Posterior vena cava (tissue), 2 donors: ENCODE measurements at regions of chr20 and their contacts with region 1.

Region 1: GRCh38 chr20:37990571-37991151 is 42.6 kb downstream of the TTI1 start:
- DNase-seq: no peak

Region 2: DNA sequence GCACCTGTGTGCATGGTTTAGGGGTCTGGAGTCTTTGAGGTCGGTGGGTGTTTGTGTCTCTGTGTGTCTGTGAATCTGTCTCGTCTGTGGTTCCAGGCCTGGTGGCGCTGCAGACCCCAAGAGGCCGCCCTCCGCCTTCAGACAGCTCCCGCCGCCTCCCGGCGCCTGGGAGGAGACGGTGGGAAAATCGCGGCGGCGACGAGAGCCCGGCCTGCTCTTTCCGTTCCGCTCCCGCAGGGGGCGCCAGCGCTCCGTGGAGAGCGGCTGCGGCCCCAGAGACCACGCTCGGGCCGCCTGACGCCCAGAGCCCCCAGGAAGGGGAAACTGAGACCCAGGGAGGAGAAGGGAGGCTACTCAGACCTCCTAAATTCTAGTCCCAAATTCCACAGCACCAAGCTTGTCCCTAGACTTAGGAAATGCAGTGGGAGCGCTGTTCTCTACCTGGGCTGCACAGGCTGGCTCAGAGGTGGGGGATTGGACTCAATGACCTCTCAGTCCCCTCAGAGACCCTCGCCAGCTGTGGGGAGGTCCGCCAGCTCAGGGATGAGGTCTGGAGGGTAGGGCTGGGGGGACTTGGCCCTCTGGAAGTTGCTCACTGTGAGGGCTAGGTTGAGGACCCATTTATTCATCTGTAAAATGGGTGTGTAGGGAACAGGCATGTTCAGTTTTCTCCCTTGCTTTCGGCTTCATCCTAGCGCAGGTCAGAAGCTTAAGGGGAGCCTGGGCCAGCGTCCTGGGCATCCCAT is 426.1 kb before region 1 on chr20:
- intact Hi-C with region 1: loop called in 1 of 2 experiments (anchors 5 kb)
- DNase-seq: peak; percentile 88

Region 3: DNA sequence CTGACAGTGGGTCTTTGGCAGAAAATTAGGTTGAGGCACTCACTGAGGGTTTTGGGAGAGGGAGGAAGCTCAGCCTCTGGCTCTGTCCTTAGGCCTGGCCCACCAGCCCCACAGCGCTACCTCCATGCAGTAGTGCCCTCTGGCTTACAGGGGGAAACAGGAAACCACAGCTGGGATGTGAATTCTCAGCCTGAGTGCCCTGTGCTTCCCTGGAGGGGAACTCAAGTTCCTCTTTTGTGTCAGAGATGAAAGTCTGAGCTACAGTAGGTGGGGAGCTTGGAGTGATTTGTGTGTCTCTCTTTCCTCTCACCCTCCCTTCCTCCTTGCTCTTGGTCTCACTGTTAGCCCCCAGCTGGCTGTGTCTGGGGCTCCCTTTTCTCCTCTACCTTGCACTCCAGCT is 414.8 kb before region 1 on chr20:
- intact Hi-C with region 1: loop called in 1 of 2 experiments (anchors 10 kb)
- DNase-seq: peak; percentile 60

Region 4: DNA sequence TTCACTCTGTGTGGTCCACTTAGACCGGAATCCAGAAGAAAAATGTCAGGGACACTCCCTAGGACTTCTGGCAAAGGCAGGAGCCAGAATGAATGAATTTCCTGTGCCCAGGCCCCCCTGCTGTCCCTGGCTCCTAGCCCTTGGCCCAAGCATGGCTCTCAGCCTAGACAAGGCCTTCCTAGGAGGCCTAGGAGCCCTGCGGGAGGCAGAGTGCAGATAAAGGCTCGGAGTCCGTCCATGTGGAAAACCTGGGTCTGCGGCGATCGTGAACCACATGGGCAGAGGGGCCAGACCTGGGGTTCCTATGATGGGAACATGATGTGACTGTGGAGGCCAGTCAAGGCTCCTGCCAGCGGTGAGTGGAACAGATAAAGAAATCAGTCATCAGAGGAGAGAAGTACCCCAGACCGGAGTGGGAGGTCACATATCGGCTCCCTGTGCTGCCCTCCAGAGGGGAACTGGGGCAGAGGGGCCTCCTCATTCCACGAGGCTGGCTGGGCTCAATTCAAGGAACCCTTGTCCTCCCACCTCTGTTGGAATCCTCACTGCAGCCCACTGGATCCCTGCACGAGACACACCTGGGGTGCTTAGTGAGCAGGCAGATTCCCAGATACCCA is 93.6 kb before region 1 on chr20:
- intact Hi-C with region 1: loop called in 1 of 2 experiments (anchors 5 kb)
- DNase-seq: no peak

Region 5: DNA sequence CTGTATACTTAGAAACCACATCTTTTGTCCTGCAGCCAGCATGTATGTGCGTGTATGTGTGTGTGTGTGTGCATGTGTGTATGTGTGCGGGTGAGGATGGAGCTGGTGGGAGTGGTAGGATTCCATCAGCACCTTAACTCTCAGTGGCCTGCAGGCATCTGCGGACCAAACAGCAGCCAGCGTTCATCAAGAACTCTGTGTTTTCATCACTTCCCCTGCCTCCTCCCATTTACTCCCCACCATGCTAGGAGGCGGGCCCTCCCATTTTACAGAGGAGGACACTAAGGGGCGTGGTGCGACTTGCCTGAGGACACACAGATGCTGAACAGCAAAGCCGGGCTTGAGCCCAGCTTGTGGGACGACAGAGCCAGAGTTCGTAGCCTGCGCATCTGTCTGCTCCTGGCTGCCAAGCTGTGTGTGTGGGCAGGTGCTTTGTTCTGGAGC is 78.8 kb before region 1 on chr20:
- intact Hi-C with region 1: loop called in 1 of 2 experiments (anchors 5 kb)
- DNase-seq: no peak